Gastrocnemius medialis (tissue), 4 donors: ENCODE measurements at regions of chr6 and their contacts with region 1.

Region 1: DNA sequence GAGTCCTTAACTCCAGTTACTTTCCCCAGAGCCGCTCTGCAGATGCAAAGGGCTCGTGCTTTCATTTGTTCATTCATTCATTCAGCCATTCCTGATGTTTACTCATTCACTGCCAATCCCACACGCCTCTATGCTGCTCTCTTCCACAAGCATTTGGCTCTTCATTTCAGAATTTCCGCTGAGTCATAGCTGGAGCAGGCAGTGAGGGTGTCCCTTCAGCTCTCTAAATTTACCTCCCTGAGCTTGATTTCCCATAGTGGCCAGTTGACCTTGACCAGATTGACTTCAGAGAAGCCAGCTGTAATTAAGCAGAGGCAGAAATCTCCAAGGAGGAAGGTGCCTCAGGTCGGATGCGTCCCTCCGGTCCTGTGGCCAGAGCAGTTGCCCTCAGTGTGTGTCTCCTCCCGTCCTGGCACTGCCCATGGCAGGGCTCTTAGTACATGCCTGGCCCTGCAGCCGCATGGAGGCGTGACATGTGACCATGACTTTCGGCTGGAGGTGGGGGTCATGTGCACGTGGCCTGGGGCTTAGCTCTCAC is 267.1 kb upstream of the ECI2 start:
- DNase-seq: peak; percentile 77 to 91
- ATAC-seq: peak; percentile 67 to 69
- H3K4me3 ChIP-seq: peak overlapping the region in 2 of 4 donors; percentile 7 to 21
- H3K27ac ChIP-seq: peak overlapping the region; percentile 92 to 97 (median 94)
- H3K4me1 ChIP-seq: peaks cover 53 to 59% of the 10 kb centered on the region in 2 donors
- H3K27me3 ChIP-seq: no peaks in the 10 kb centered on the region
- CTCF ChIP-seq: no peak
- POLR2A ChIP-seq: peak; percentile 43 to 61

Region 2: GRCh38 chr6:4358414-4359114 is 43.9 kb before region 1 on chr6:
- in situ Hi-C with region 1: no loop called
- intact Hi-C with region 1: loop called (anchors 1 kb)
- DNase-seq: peak; percentile 96 to 99
- ATAC-seq: peak; percentile 91 to 96
- H3K4me3 ChIP-seq: peak overlapping the region in 3 of 4 donors; percentile 14 to 26 (median 20)
- H3K27ac ChIP-seq: peak overlapping the region; percentile 93 to 99 (median 94)
- H3K4me1 ChIP-seq: peaks cover 8 to 13% of the 10 kb centered on the region in 2 donors
- H3K27me3 ChIP-seq: no peaks in the 10 kb centered on the region
- CTCF ChIP-seq: no peak
- POLR2A ChIP-seq: peak; percentile 46 to 84

Region 3: DNA sequence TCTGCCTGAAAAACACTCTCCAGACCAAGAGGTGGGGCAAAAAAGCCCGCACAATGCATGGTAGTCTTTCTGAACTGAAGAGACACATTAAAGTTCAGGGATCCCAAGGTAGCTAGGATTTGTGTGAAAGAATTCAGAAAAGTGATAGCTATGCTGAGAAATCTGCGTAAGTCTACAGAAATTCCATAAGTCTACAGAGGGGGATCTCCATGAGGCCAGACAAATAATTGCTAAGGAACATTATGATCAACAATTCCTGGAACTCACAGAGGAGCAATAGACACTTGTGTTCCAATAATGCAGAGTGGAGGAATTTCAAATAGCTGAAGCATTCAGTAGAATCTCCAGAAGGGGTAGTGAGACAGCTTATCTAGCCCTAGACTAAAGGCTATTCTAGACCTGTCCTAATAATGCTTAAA is 48.5 kb after region 1 on chr6:
- in situ Hi-C with region 1: no loop called
- intact Hi-C with region 1: loop called (anchors 2 kb)
- DNase-seq: no peak
- ATAC-seq: no peak
- H3K4me3 ChIP-seq: no peak overlapping the region
- H3K27ac ChIP-seq: peak overlapping the region in 1 of 4 donors; percentile 40
- H3K4me1 ChIP-seq: peaks cover 6 to 7% of the 10 kb centered on the region in 2 donors
- H3K27me3 ChIP-seq: no peaks in the 10 kb centered on the region
- CTCF ChIP-seq: no peak
- POLR2A ChIP-seq: no peak

Region 4: DNA sequence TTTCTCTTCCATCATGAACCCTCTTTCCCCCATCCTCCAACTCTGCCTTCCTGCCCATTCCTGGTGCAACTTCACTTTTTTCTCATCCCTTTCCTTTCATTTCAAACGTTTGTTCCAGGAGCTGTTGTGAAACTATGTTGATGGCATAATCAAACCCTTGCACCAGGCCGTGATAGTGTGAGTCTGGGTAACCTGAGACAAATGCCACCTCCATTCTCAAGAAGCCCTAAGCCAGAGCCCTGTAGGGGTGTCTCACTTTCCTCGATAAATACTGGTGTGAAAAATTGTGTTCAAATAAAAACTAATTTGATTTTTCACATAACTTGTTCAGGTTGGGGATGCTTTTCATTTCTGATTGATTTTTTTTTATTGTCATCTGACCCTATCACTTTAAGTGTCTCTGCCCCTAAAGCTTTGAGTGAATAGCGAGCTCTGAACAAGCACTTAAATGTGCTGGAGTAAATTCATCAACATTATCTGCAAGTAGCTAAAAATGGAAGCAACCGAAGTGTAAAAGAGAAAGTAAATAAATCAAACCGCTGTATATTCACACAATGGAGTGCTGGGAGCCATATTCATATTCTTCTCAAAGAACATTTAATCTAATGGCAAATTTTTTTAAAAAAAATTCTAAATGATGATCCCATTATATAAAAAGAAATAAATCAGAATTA is 70.6 kb after region 1 on chr6:
- in situ Hi-C with region 1: no loop called
- intact Hi-C with region 1: loop called (anchors 5 kb)
- DNase-seq: no peak
- ATAC-seq: no peak
- H3K4me3 ChIP-seq: no peak overlapping the region
- H3K27ac ChIP-seq: no peak overlapping the region
- H3K4me1 ChIP-seq: peaks cover 0 to 6% of the 10 kb centered on the region in 2 donors
- H3K27me3 ChIP-seq: no peaks in the 10 kb centered on the region
- CTCF ChIP-seq: no peak
- POLR2A ChIP-seq: no peak

Region 5: GRCh38 chr6:4577406-4577805 is 174.9 kb after region 1 on chr6:
- in situ Hi-C with region 1: no loop called
- intact Hi-C with region 1: no loop called
- DNase-seq: no peak
- ATAC-seq: peak in 1 of 2 donors; percentile 36
- H3K4me3 ChIP-seq: no peak overlapping the region
- H3K27ac ChIP-seq: no peak overlapping the region
- H3K4me1 ChIP-seq: no peaks in the 10 kb centered on the region
- H3K27me3 ChIP-seq: no peaks in the 10 kb centered on the region
- CTCF ChIP-seq: no peak
- POLR2A ChIP-seq: no peak

Region 6: DNA sequence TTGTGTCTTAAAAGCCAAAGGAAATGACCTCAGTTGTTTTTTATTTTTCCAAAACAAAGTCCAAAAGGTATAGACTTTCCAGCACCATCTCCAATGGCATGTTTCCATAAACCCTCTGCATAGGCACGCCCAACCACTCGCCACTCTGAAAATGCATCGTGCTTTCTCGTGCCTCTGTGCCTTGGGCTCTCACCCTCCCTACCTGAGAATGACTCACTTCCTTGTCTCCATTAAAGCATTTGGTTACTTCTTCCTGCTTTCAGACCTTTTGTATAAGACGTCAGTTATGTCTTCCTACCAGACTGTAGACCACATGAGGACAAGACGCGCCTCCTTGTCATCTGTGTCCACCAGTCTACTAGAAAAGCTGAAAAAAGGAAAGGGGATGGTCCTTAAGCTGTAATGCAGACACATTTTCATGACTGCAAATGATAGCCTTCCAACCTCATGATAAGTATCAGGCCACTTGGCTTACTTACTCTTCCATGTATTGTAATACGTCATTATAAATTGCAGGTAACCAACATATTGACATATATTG is 312.5 kb after region 1 on chr6:
- in situ Hi-C with region 1: no loop called
- intact Hi-C with region 1: no loop called
- DNase-seq: no peak
- ATAC-seq: no peak
- H3K4me3 ChIP-seq: no peak overlapping the region
- H3K27ac ChIP-seq: no peak overlapping the region
- H3K4me1 ChIP-seq: no peaks in the 10 kb centered on the region
- H3K27me3 ChIP-seq: no peaks in the 10 kb centered on the region
- CTCF ChIP-seq: no peak
- POLR2A ChIP-seq: no peak

Region 7: DNA sequence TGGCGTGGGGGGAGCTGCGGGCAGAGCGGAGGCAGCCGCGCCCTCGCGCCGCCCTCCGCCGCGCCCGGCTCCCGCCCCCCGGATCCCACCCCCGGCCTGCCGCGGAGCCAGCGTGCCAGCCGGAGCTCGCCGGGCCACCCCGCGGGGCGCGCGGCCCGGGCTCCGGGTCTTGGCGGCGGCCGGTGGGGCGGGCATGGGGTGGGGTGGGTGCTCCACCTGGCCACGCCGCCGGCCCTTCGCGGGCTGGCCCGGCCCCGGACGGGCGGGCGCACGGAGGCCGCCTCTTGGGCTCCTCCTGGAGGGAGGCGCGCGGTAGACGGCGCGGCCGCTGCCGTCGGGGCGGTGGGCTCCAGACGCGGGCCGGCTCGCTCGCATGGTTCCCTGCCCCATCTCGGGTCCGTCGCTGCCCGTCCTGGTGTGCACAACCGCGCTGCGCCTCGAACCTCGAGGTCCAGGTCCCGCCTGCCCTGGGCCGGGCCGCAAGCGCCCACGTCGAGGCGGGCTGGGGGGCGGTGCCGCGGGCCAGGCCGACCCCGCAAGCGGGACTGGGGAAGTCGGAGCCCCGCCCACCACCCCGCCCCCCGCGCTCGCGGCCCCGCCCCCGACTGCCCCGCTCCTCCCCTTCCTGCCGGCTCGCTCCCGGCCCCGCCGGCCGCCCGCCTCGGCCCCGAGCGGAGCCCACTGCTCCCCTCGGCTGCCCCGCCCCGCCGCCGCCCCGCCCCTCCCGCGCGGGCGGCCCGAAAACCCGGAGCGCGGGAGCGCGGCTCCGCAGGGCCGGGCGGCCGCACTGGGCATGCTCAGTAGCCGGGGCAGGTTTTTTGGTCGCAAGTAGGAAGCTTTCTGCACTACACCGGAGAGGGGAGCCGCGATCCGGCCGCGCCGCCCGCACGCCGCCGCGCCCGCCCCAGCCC is 373.3 kb after region 1 on chr6 and contains the start of gene CDYL:
- in situ Hi-C with region 1: no loop called
- intact Hi-C with region 1: loop called (anchors 2 kb)
- DNase-seq: peak; percentile 75 to 85
- ATAC-seq: peak; percentile 86
- H3K4me3 ChIP-seq: peak within 1 kb of the TSS; percentile 62 to 82 (median 72)
- H3K27ac ChIP-seq: peak within 1 kb of the TSS; percentile 72 to 83 (median 78)
- H3K4me1 ChIP-seq: peaks cover 18 to 21% of the 10 kb centered on the region in 2 donors
- H3K27me3 ChIP-seq: no peaks in the 10 kb centered on the region
- CTCF ChIP-seq: peak in 1 of 5 experiments; percentile 34
- POLR2A ChIP-seq: peak; percentile 55
- total RNA-seq, gene CDYL: 24.1 to 24.8 (median 24.5) TPM